Activated CD4-positive, alpha-beta T cell treated with anti-CD3 and anti-CD28 coated beads, Interleukin-2, amount 10 ng/mL, durations not matched to agents 7 days and 5 days (primary cell): ENCODE measurements at regions of chr20 and their contacts with region 1.

Region 1: GRCh38 chr20:53773792-53774401 is 180.3 kb upstream of the ZNF217 start:
- DNase-seq: no peak
- H3K4me3 Mint-ChIP-seq: no peak overlapping the region
- H3K27ac Mint-ChIP-seq: no peak overlapping the region
- H3K4me1 Mint-ChIP-seq: no peaks in the 10 kb centered on the region
- H3K27me3 Mint-ChIP-seq: no peaks in the 10 kb centered on the region

Region 2: DNA sequence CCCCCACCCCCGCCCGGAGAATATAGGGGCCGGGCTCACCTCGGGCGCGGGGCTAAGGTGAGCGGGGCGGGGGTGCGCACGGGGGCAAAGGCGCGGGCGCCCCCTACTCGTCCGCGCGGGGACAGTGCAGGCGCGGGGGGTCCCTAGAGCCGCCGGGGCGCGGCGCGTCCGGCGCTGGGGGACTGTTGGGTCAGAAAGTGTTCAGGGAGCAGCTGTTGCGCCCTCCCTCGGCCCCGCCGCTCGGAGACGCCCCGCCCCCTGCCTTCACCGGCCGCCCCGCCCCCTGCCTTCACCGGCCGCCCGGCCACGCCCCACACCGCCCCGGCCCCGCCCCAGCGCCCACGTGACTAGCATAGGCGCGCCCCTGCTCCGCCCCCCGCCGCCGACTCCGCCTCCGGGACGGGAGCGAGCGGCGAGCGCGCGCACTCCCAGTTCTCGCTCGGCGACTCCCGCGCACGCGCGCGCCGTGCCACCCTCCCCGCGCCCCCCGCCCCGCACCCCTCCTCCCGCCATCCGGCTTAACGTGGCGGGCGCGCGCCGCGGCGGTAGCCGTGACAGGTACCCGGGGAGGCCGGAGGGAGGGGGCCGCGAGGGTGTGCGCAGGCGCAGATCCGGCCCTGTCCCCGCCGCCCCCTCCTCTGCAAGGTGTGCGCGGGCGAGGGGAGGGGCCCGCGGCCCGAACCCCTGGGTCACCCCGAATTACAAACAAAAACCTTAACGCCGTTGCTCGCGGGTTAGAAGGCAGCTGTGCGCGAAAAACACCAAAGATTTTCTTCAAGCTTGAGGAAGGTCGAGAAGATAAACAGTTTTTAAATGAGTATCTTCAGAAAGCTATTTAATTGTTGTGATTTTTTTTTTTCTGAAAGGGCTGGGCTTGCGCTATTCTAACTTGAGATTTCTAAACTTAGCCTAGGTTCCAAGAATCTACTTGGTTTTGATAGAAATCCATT is 179.6 kb before region 1 on chr20:
- CTCF ChIA-PET with region 1: no interaction called
- POLR2A ChIA-PET with region 1: no interaction called
- DNase-seq: peak; percentile 96
- H3K4me3 Mint-ChIP-seq: peak overlapping the region; percentile 99
- H3K27ac Mint-ChIP-seq: peak overlapping the region; percentile 96
- H3K4me1 Mint-ChIP-seq: peaks cover 48% of the 10 kb centered on the region
- H3K27me3 Mint-ChIP-seq: no peaks in the 10 kb centered on the region

Region 3: DNA sequence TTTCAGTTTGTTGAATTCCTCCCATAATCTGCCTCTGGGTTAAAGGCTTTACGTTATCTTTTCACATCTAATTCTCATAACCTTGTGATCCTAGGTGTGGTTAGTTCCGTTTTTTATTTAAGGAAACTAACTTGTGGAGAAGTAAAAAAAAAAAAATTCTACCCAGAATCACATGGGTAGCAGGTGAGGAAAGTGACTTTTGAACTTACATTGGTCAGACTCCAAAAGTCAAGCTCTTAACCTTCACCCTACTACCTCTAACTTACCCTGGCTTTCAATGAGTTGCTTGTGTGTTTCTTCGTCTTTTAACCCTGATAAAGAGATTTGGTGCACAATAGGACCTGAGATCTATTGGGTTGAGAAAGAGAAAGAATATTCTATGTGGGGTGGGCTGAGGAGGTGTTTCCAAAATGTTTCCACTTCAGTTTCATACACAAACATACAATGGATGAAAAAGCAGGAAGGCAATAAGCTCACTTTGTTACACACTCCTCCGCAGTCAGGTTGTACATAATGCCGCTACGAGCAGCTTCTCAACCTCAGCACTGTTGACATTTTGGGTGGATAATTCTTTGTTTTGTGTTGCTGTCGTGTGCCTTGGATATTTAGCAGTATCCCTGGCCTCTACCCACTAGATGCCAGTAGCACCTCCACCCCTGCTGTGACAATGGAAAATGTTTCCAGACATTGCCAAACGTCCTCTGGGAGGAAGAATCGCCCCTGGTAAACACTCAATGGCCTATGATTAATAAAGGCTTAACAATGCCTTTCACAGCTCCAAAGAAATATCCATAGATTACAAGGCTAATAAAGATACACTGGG is 12.8 kb after region 1 on chr20:
- CTCF ChIA-PET with region 1: interaction called, 11 read pairs
- POLR2A ChIA-PET with region 1: no interaction called
- DNase-seq: no peak
- H3K4me3 Mint-ChIP-seq: no peak overlapping the region
- H3K27ac Mint-ChIP-seq: no peak overlapping the region
- H3K4me1 Mint-ChIP-seq: peaks cover 13% of the 10 kb centered on the region
- H3K27me3 Mint-ChIP-seq: no peaks in the 10 kb centered on the region

Region 4: GRCh38 chr20:53974785-53975555 is 201.1 kb after region 1 on chr20:
- CTCF ChIA-PET with region 1: no interaction called
- POLR2A ChIA-PET with region 1: no interaction called
- DNase-seq: no peak
- H3K4me3 Mint-ChIP-seq: no peak overlapping the region
- H3K27ac Mint-ChIP-seq: no peak overlapping the region
- H3K4me1 Mint-ChIP-seq: no peaks in the 10 kb centered on the region
- H3K27me3 Mint-ChIP-seq: no peaks in the 10 kb centered on the region